Activated CD4-positive, alpha-beta T cell treated with anti-CD3 and anti-CD28 coated beads, Interleukin-2, amount 10 ng/mL, durations not matched to agents 24 days and 14 days (primary cell): ENCODE measurements at regions of chr13 and their contacts with region 1.

Region 1: GRCh38 chr13:27919934-27920676 is at the start of gene PDX1:
- DNase-seq: no peak
- H3K4me3 Mint-ChIP-seq: peak within 1 kb of the TSS; percentile 67
- H3K27ac Mint-ChIP-seq: peak within 1 kb of the TSS; percentile 72
- H3K4me1 Mint-ChIP-seq: peaks cover 12% of the 10 kb centered on the region
- H3K27me3 Mint-ChIP-seq: peaks cover 77% of the 10 kb centered on the region
- total RNA-seq, gene PDX1: not detected in 2 replicates

Region 2: DNA sequence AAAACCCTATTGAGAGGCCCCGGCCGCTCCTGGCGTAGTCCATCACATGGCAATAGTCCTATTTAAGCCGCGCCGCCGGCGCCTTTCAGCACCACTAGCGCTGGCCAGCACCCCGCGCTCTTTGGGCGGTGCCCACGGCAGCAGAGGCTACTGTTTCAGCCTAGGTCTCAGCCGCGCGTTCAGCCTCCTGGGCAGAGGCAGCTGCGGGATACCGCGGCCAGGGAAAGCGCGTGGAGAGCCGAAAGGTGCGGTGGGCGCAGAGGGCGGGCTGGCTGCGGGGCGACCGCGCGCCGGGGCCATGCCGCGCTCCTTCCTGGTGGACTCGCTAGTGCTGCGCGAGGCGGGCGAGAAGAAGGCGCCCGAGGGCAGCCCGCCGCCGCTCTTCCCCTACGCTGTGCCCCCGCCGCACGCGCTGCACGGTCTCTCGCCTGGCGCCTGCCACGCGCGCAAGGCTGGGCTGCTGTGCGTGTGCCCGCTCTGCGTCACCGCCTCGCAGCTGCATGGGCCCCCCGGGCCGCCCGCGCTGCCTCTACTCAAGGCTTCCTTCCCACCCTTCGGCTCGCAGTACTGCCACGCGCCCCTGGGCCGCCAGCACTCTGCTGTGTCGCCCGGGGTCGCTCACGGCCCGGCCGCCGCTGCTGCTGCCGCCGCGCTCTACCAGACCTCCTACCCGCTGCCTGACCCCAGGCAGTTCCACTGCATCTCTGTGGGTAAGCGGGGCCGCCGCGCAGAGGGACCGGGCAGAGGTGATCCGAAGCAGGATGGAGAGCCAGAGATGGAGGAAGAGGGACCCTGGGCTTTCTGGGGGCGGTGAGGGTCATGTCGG is 127.5 kb before region 1 on chr13 and contains the start of gene GSX1:
- intact Hi-C with region 1: loop called (anchors 2 kb)
- DNase-seq: peak; percentile 83
- H3K4me3 Mint-ChIP-seq: peak within 1 kb of the TSS; percentile 76
- H3K27ac Mint-ChIP-seq: peak within 1 kb of the TSS; percentile 46
- H3K4me1 Mint-ChIP-seq: peaks cover 21% of the 10 kb centered on the region
- H3K27me3 Mint-ChIP-seq: peaks cover 76% of the 10 kb centered on the region
- total RNA-seq, gene GSX1: not detected in 2 replicates

Region 3: DNA sequence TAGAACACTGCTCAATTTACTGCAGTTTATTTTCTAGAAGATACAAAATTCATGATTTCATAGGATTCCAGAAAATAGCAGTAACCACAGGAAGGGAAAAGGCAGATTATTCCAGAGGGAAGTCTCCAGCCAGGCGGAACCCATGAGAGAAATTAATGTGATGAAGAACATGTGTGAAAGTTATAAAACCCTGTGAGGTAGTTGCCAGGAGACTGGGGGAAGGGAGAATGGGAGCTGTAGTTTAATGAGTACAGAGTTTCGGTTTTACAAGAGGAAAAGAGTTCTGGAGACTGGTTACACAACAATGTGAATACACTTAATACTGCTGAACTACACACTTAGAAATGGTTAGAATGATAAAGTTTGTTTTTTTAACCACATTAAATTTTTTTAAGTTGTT is 14.5 kb before region 1 on chr13:
- intact Hi-C with region 1: no loop called
- DNase-seq: no peak
- H3K4me3 Mint-ChIP-seq: no peak overlapping the region
- H3K27ac Mint-ChIP-seq: no peak overlapping the region
- H3K4me1 Mint-ChIP-seq: no peaks in the 10 kb centered on the region
- H3K27me3 Mint-ChIP-seq: peaks cover 30% of the 10 kb centered on the region